AG04449 (cell line): ENCODE measurements at regions of chr14 and their contacts with region 1.

Region 1: GRCh38 chr14:104078031-104078455 is 7.5 kb upstream of the ASPG start:
- DNase-seq: peak; percentile 52
- H3K4me3 ChIP-seq: no peak overlapping the region
- CTCF ChIP-seq: peak; percentile 99

Region 2: GRCh38 chr14:104130974-104131651 is 53.1 kb after region 1 on chr14:
- CTCF ChIA-PET with region 1: interaction called, 12 read pairs
- POLR2A ChIA-PET with region 1: no interaction called
- DNase-seq: no peak
- H3K4me3 ChIP-seq: no peak overlapping the region
- CTCF ChIP-seq: peak; percentile 37

Region 3: GRCh38 chr14:104563742-104564615 is 485.9 kb after region 1 on chr14:
- CTCF ChIA-PET with region 1: interaction called, 27 read pairs
- POLR2A ChIA-PET with region 1: no interaction called
- DNase-seq: no peak
- H3K4me3 ChIP-seq: no peak overlapping the region
- CTCF ChIP-seq: peak; percentile 90

Region 4: GRCh38 chr14:104639889-104640548 is 562.0 kb after region 1 on chr14:
- CTCF ChIA-PET with region 1: interaction called, 29 read pairs
- POLR2A ChIA-PET with region 1: no interaction called
- DNase-seq: no peak
- H3K4me3 ChIP-seq: no peak overlapping the region
- CTCF ChIP-seq: peak; percentile 99